ENCODE measurements at regions of chr3 and their contacts with region 1.

Region 1: GRCh38 chr3:58617338-58617761 is 40.2 kb upstream of the FAM107A start:
- DNase-seq: no peak
- H3K4me3 ChIP-seq: no peak overlapping the region; a peak in 1 of 8 replicates
- H3K27ac ChIP-seq: no peak overlapping the region
- H3K4me1 ChIP-seq: peaks cover 0 to 4% (median 0%) of the 10 kb centered on the region in 4 experiments; a peak in 1 of 7 replicates
- H3K27me3 ChIP-seq: no peaks in the 10 kb centered on the region
- CTCF ChIP-seq: no peak
- EP300 ChIP-seq: no peak
- POLR2A ChIP-seq: no peak
- RAD21 ChIP-seq: no peak

Region 2: DNA sequence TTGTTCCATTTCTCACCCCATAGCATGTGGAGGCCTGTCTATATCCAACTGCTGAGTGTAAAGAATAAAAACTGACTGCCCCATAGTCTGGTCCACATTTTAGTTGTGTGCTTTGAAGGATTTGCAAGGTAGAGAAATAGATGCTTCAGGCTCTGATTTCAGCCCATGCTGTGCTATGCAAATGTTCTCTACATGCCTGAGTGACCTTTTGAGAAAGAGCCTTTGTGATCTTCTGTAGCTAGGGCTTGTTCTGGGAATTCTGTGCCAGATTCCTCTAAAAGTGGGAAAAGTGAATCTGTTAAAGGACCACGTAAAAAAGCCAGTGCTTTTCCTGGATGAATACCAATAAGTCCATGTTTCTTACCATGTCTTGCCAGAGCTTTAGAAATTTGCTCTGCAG is 120.3 kb before region 1 on chr3:
- CTCF ChIA-PET with region 1: no interaction called
- POLR2A ChIA-PET with region 1: no interaction called
- DNase-seq: no peak
- H3K4me3 ChIP-seq: peak overlapping the region in 2 of 4 experiments; percentile 26 to 42; a peak in 3 of 8 replicates
- H3K27ac ChIP-seq: no peak overlapping the region
- H3K4me1 ChIP-seq: peaks cover 4 to 16% (median 10%) of the 10 kb centered on the region in 4 experiments; a peak in 6 of 7 replicates
- H3K27me3 ChIP-seq: no peaks in the 10 kb centered on the region
- CTCF ChIP-seq: no peak
- EP300 ChIP-seq: no peak
- POLR2A ChIP-seq: no peak
- RAD21 ChIP-seq: no peak

Region 3: GRCh38 chr3:58560771-58561311 is 56.5 kb before region 1 on chr3:
- CTCF ChIA-PET with region 1: interaction called, 62 read pairs
- POLR2A ChIA-PET with region 1: no interaction called
- DNase-seq: peak in 1 of 2 experiments; percentile 78
- H3K4me3 ChIP-seq: no peak overlapping the region
- H3K27ac ChIP-seq: peak overlapping the region; percentile 53
- H3K4me1 ChIP-seq: peaks cover 7 to 16% (median 11%) of the 10 kb centered on the region in 4 experiments
- H3K27me3 ChIP-seq: no peaks in the 10 kb centered on the region
- CTCF ChIP-seq: peak in 2 of 3 experiments; percentile 76 to 84; a peak in 3 of 4 replicates
- EP300 ChIP-seq: peak in 1 of 2 experiments; percentile 98; a peak in 2 of 3 replicates
- POLR2A ChIP-seq: no peak
- RAD21 ChIP-seq: peak; percentile 94 to 95

Region 4: DNA sequence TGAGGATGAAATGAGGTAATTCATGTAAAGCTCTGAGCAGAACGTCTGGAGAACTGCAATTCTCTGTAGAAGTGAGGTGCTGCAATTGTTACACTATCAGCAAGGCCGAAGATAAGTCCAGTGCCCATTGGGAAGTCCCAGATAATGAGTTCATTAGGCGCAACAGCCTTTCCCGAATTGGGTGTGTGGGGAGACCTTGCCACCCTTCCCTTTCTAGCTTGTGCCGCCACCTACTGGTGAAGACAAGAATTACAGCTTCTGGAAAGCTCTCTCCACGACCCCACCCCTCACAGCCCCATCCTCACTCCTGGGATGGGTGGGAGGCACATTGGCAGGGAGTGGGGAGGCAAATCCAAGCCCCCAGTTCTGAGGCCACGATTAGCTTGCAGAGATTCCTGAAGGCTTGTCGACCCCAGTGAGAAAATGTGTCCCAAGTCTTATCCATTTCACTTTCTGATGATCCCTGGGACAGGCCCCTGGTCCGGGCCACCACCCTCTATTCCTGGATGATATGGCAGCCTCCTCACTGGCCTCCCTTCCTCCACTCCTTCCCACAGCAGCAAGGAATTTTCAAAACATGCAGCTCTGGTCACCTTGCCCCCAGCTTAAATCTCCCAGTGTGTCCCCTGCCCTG is 12.8 kb after region 1 on chr3:
- CTCF ChIA-PET with region 1: interaction called, 37 read pairs
- POLR2A ChIA-PET with region 1: interaction called, 3 read pairs
- DNase-seq: peak; percentile 23 to 96
- H3K4me3 ChIP-seq: no peak overlapping the region
- H3K27ac ChIP-seq: no peak overlapping the region
- H3K4me1 ChIP-seq: peaks cover 0 to 4% (median 0%) of the 10 kb centered on the region in 4 experiments; a peak in 2 of 7 replicates
- H3K27me3 ChIP-seq: peaks cover under 1 to 25% (median 5%) of the 10 kb centered on the region in 4 experiments; a peak in 6 of 7 replicates
- CTCF ChIP-seq: peak; percentile 70 to 92 (median 89)
- EP300 ChIP-seq: no peak
- POLR2A ChIP-seq: no peak
- RAD21 ChIP-seq: peak; percentile 92 to 93

Region 5: GRCh38 chr3:58776231-58776630 is 158.9 kb after region 1 on chr3:
- CTCF ChIA-PET with region 1: no interaction called
- POLR2A ChIA-PET with region 1: no interaction called
- DNase-seq: no peak
- H3K4me3 ChIP-seq: no peak overlapping the region
- H3K27ac ChIP-seq: no peak overlapping the region
- H3K4me1 ChIP-seq: no peaks in the 10 kb centered on the region
- H3K27me3 ChIP-seq: no peaks in the 10 kb centered on the region
- CTCF ChIP-seq: peak in 1 of 3 experiments; percentile 47; a peak in 2 of 4 replicates
- EP300 ChIP-seq: no peak
- POLR2A ChIP-seq: no peak
- RAD21 ChIP-seq: peak; percentile 57 to 59